ENCODE measurements at regions of chr4 and their contacts with region 1.

Region 1: GRCh38 chr4:152535903-152536544 is at the start of gene FBXW7:
- DNase-seq: peak; percentile 100
- H3K4me3 Mint-ChIP-seq: peak within 1 kb of the TSS; percentile 97
- H3K27ac Mint-ChIP-seq: peak within 1 kb of the TSS; percentile 100
- H3K4me1 Mint-ChIP-seq: peaks cover 43% of the 10 kb centered on the region
- H3K27me3 Mint-ChIP-seq: no peaks in the 10 kb centered on the region
- total RNA-seq, gene FBXW7: 42.2 and 49.1 TPM in 2 replicates

Region 2: DNA sequence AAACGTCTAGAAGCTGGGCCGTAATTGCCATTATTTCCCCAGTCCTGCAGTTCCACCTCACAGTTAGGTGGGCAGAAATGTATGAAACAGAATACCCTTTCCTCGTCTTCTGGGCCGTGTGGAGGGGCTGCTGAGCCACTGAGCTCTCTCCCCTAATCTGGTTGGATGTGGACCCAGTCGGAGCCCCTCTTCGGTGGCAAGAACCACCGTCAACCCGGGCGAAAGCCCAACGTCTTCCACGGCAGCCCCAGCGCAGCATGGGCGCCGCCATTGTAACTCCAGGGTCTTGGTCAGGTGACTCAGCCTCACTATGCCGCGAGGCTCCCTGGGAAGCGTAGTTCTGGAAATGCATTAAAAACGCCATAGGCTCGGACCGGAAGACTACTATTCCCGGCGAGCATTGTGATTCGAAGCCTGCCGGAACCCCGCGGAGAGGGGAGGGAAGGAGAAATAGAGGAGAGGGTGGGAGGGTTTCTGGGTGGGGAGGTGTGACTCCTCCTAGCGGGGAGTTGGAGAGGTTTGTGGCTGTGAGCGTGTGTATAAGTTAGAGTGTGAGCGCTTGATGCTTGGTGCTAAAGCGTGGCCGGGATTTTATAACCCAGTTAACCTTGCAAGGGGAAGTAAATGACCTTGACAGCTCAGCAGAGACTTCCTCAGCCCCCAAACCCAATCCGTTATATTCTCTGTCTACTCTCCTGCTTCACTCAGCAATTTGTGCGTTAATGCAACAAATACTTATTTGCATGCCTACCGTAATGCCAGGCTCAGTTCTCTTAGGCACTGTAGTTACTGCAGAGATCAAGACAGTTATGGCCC is 775.1 kb before region 1 on chr4 and contains the start of gene GATB:
- intact Hi-C with region 1: loop called (anchors 1 kb)
- DNase-seq: peak; percentile 97
- H3K4me3 Mint-ChIP-seq: peak within 1 kb of the TSS; percentile 93
- H3K27ac Mint-ChIP-seq: peak within 1 kb of the TSS; percentile 95
- H3K4me1 Mint-ChIP-seq: peaks cover 15% of the 10 kb centered on the region
- H3K27me3 Mint-ChIP-seq: peaks cover 7% of the 10 kb centered on the region
- total RNA-seq, gene GATB: 15.7 and 20.2 TPM in 2 replicates

Region 3: GRCh38 chr4:152485726-152486276 is 50.2 kb before region 1 on chr4:
- intact Hi-C with region 1: loop called (anchors 1 kb)
- DNase-seq: peak; percentile 89
- H3K4me3 Mint-ChIP-seq: peak overlapping the region; percentile 43
- H3K27ac Mint-ChIP-seq: peak overlapping the region; percentile 56
- H3K4me1 Mint-ChIP-seq: peaks cover 38% of the 10 kb centered on the region
- H3K27me3 Mint-ChIP-seq: no peaks in the 10 kb centered on the region

Region 4: GRCh38 chr4:152525873-152526272 is 10.2 kb before region 1 on chr4:
- intact Hi-C with region 1: loop called (anchors 1 kb)
- DNase-seq: no peak
- H3K4me3 Mint-ChIP-seq: no peak overlapping the region
- H3K27ac Mint-ChIP-seq: no peak overlapping the region
- H3K4me1 Mint-ChIP-seq: peaks cover 46% of the 10 kb centered on the region
- H3K27me3 Mint-ChIP-seq: no peaks in the 10 kb centered on the region

Region 5: DNA sequence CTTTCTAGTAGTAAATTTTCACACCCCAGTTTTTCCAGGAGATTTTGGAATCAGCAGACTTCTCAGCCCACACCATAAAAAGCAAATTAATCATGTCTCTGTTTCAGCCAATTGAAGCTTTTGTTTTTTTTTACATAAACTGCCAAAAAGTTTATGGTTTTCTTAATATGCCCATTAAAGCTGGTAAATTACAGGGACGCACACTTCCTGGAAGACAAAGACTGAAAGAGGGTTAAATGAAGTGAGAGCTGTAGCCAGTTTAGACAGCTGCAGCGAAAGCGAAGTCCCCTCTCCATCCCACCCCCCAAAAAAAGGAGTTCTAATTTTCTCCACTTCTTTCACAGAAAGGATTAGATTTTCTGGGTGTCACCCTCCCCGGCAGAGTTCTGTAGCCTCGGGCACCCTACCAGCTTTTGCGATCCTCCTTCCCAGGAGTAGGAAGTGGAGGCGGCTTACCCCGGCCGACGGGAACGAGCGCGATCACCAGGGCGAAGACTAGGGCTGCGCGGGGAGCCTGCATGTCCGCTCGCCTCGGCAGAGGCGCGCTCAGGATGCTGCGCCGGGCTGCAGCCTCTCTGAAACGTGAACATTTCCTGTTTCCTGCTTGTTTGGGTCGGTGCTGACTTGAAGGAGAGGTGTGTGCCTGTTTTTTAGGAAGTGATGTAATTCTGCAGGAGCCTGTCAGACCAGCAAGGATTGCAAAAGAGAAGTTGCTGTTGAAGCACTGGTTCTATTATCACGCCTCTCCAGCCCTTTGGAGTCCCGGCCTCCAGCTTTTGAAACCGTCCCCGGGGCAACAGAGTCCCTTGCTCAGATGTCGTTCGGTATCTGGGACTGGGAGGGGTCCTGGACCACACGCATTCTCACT is 143.6 kb after region 1 on chr4 and contains the start of gene TMEM154:
- intact Hi-C with region 1: loop called (anchors 2 kb)
- DNase-seq: peak; percentile 94
- H3K4me3 Mint-ChIP-seq: peak within 1 kb of the TSS; percentile 87
- H3K27ac Mint-ChIP-seq: peak within 1 kb of the TSS; percentile 88
- H3K4me1 Mint-ChIP-seq: peaks cover 58% of the 10 kb centered on the region
- H3K27me3 Mint-ChIP-seq: no peaks in the 10 kb centered on the region
- total RNA-seq, gene TMEM154: 7.9 and 9.0 TPM in 2 replicates

Region 6: DNA sequence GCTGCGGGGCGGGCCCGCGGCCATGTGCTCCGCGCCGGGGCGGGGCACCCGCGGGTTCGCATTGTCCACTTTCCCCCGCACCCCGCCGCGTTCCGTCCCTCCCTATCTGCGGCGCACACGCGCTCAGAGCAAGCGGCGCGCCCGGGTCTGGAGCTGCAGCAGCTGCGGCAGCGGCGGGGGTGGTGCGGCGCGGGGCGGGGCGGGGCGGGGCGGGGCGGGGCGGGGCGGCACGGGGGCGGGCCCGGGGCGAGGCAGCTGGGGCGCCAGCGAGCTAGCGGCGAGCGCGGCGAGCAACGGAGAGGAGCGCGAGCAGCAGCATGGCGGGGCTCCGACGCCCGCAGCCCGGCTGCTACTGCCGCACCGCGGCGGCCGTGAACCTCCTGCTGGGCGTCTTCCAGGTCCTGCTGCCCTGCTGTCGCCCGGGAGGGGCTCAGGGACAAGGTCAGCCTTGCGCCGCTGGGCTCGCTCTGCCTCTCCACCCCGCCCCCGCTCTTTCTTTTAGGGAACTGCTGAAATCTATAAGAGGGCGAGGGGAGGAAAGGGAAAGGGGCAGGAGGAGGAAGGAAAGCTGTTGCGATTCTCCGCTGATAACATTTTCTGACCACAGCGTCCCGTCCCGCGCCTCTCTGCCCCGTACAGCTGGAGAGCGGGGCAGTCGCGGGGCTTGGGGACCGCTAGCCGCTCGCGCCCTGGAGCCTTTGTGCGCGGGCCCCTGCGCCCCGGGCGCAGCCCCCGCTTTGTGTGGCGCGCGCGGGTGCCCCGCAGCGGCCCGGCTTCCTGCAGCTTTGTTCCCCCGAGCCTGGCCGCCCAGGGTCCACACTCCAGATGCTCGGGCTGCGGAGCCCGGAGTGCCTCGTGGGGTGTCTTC is 930.3 kb after region 1 on chr4 and contains the start of gene TMEM131L:
- intact Hi-C with region 1: loop called (anchors 5 kb)
- DNase-seq: peak; percentile 90
- H3K4me3 Mint-ChIP-seq: peak within 1 kb of the TSS; percentile 85
- H3K27ac Mint-ChIP-seq: peak within 1 kb of the TSS; percentile 93
- H3K4me1 Mint-ChIP-seq: peaks cover 47% of the 10 kb centered on the region
- H3K27me3 Mint-ChIP-seq: no peaks in the 10 kb centered on the region
- total RNA-seq, gene TMEM131L: 40.3 and 40.6 TPM in 2 replicates